ENCODE measurements at regions of chr1 and their contacts with region 1.

Region 1: DNA sequence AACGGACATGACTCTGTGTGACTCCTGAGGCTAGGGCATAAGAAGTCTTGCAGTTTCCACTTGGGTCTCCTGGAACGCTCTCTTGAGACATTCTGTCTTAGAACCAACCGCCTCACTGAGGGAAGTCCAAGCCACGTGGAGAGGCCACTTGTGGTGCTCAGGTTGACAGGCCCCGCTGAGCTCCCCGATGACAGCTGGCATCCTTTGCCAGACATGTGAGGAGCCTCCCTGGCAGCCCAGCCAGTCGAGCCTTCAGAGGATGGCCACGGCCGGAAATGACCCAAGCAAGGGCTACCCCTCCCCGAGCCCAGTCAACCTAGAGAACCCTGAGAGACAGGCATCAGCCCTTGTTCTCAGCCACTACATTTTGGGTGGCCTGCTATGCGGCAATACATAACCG is 20.7 kb downstream of the PLEKHA6 start:
- DNase-seq: no peak
- ATAC-seq: no peak
- H3K4me3 ChIP-seq: no peak overlapping the region
- H3K27ac ChIP-seq: no peak overlapping the region
- H3K4me1 ChIP-seq: no peaks in the 10 kb centered on the region
- H3K27me3 ChIP-seq: no peaks in the 10 kb centered on the region
- CTCF ChIP-seq: no peak

Region 2: GRCh38 chr1:204263254-204263910 is 75.6 kb before region 1 on chr1:
- CTCF ChIA-PET with region 1: no interaction called
- POLR2A ChIA-PET with region 1: no interaction called
- in situ Hi-C with region 1: no loop called
- intact Hi-C with region 1: no loop called
- DNase-seq: no peak
- ATAC-seq: no peak
- H3K4me3 ChIP-seq: no peak overlapping the region
- H3K27ac ChIP-seq: no peak overlapping the region
- H3K4me1 ChIP-seq: no peaks in the 10 kb centered on the region
- H3K27me3 ChIP-seq: no peaks in the 10 kb centered on the region
- CTCF ChIP-seq: no peak

Region 3: DNA sequence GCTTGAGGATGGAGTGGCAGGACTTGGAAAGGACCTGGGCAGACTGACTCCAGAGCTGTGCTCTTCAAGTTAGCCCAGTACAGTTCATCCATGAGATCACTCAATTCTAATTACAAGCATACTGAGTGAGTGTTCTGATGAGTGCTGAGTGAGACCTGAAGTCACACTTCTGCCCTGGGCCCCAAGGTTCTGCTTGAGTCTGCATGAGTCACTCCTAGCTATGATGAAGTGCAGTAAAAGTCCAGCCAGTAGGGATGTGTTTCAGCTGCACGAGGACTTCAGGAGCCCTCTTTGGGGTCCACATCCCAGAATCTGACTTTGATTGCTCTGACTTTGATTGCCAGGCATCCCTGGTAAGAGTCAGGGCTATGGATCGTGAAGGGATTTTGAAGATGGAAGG is 15.1 kb before region 1 on chr1:
- CTCF ChIA-PET with region 1: no interaction called
- POLR2A ChIA-PET with region 1: interaction called, 13 read pairs
- in situ Hi-C with region 1: no loop called
- intact Hi-C with region 1: no loop called
- DNase-seq: peak; percentile 28
- ATAC-seq: peak; percentile 20; the same call in 1 of the 2 replicates
- H3K4me3 ChIP-seq: no peak overlapping the region
- H3K27ac ChIP-seq: no peak overlapping the region
- H3K4me1 ChIP-seq: peaks cover 3% of the 10 kb centered on the region; the same call in 1 of the 2 replicates
- H3K27me3 ChIP-seq: no peaks in the 10 kb centered on the region
- CTCF ChIP-seq: no peak